Mammary epithelial cell (primary cell): ENCODE measurements at regions of chr6 and their contacts with region 1.

Region 1: GRCh38 chr6:54428431-54428830 is 120.2 kb downstream of the TINAG start:
- DNase-seq: no peak
- H3K4me3 ChIP-seq: no peak overlapping the region
- H3K27ac ChIP-seq: no peak overlapping the region
- H3K4me1 ChIP-seq: peaks cover 5% of the 10 kb centered on the region
- H3K27me3 ChIP-seq: no peaks in the 10 kb centered on the region
- CTCF ChIP-seq: no peak

Region 2: GRCh38 chr6:54140811-54141210 is 287.6 kb before region 1 on chr6:
- CTCF ChIA-PET with region 1: no interaction called
- dilution Hi-C with region 1: no loop called
- in situ Hi-C with region 1: no loop called
- intact Hi-C with region 1: no loop called
- DNase-seq: no peak
- H3K4me3 ChIP-seq: no peak overlapping the region
- H3K27ac ChIP-seq: no peak overlapping the region
- H3K4me1 ChIP-seq: no peaks in the 10 kb centered on the region
- H3K27me3 ChIP-seq: no peaks in the 10 kb centered on the region
- CTCF ChIP-seq: no peak

Region 3: GRCh38 chr6:54493138-54493537 is 64.7 kb after region 1 on chr6:
- CTCF ChIA-PET with region 1: no interaction called
- dilution Hi-C with region 1: no loop called
- in situ Hi-C with region 1: no loop called
- intact Hi-C with region 1: loop called (anchors 5 kb)
- DNase-seq: peak; percentile 93
- H3K4me3 ChIP-seq: no peak overlapping the region
- H3K27ac ChIP-seq: peak overlapping the region; percentile 81
- H3K4me1 ChIP-seq: peaks cover 27% of the 10 kb centered on the region
- H3K27me3 ChIP-seq: no peaks in the 10 kb centered on the region
- CTCF ChIP-seq: no peak